Sigmoid colon (tissue), 7 donors: ENCODE measurements at regions of chr9 and their contacts with region 1.

Region 1: GRCh38 chr9:136790927-136791641 is at the start of gene TMEM141:
- DNase-seq: peak; percentile 100
- H3K4me3 ChIP-seq: peak within 1 kb of the TSS; percentile 43 to 76 (median 68)
- H3K27ac ChIP-seq: peak within 1 kb of the TSS; percentile 84 to 95 (median 90)
- H3K4me1 ChIP-seq: peaks cover 0 to 22% (median 20%) of the 10 kb centered on the region in 4 donors
- H3K27me3 ChIP-seq: peaks cover 0 to 5% (median 0%) of the 10 kb centered on the region in 3 donors
- CTCF ChIP-seq: no peak
- EP300 ChIP-seq: no peak
- POLR2A ChIP-seq: peak in 1 of 2 donors; percentile 84
- total RNA-seq, gene TMEM141: 37.5 to 84.7 (median 63.2) TPM

Region 2: GRCh38 chr9:136599811-136600660 is 191.0 kb before region 1 on chr9:
- intact Hi-C with region 1: no loop called
- DNase-seq: no peak
- H3K4me3 ChIP-seq: no peak overlapping the region
- H3K27ac ChIP-seq: no peak overlapping the region
- H3K4me1 ChIP-seq: peaks cover 0 to 27% (median 17%) of the 10 kb centered on the region in 4 donors
- H3K27me3 ChIP-seq: peaks cover 0 to 22% (median 0%) of the 10 kb centered on the region in 3 donors
- CTCF ChIP-seq: no peak
- EP300 ChIP-seq: no peak
- POLR2A ChIP-seq: no peak

Region 3: DNA sequence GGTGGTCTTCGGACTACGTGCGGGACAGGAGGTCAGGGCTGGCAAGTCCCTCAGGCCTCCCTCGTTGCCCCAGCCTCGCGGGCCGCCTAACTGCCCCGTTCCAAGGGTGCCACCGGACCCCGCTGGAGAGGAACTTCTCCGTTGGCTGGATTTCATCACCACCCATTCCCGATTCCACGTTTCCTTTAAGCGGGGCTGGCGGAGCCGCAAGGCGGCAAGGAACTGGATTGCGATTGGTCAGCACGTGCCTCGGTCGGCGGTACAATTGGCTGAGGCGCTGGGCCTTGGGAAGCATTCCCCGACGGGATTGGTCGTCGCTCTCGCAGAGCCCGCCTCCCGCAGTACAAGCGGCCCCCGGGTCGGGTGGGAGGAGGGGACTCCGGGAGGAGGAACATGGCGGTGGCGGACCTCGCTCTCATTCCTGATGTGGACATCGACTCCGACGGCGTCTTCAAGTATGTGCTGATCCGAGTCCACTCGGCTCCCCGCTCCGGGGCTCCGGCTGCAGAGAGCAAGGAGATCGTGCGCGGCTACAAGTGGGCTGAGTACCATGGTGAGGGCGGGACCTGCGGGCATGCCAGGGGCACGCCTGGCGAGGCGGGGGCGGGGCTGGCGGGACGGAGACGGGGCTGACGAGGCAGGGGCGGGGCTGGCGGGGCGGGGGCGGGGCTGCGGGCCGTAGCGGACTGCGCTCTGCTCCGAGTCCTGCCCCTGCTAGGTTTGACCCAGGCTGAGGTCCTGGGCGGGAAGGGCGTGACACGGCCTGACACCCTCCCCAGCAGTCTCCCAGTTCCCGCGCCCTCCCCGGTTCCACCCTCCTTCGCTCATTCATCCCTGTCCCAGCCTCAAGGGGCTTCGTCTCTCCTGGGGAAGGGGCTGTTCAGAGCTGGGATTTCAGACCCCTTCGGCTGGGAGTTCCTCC is 58.2 kb after region 1 on chr9 and contains the start of gene PHPT1:
- intact Hi-C with region 1: loop called (anchors 2 kb)
- DNase-seq: peak; percentile 100
- H3K4me3 ChIP-seq: peak within 1 kb of the TSS; percentile 68 to 82 (median 70)
- H3K27ac ChIP-seq: peak within 1 kb of the TSS; percentile 87 to 93 (median 90)
- H3K4me1 ChIP-seq: peaks cover 0 to 56% (median 51%) of the 10 kb centered on the region in 4 donors
- H3K27me3 ChIP-seq: peaks cover 24 to 40% (median 39%) of the 10 kb centered on the region in 3 donors
- CTCF ChIP-seq: no peak
- EP300 ChIP-seq: no peak
- POLR2A ChIP-seq: peak; percentile 58 to 90
- total RNA-seq, gene PHPT1: 39.0 to 73.1 (median 56.4) TPM

Region 4: GRCh38 chr9:136865735-136866103 is 74.6 kb after region 1 on chr9:
- intact Hi-C with region 1: loop called (anchors 5 kb)
- DNase-seq: peak; percentile 74
- H3K4me3 ChIP-seq: peak overlapping the region; percentile 93 to 100 (median 100)
- H3K27ac ChIP-seq: peak overlapping the region; percentile 90 to 97 (median 94)
- H3K4me1 ChIP-seq: peaks cover 0 to 29% (median 21%) of the 10 kb centered on the region in 4 donors
- H3K27me3 ChIP-seq: no peaks in the 10 kb centered on the region
- CTCF ChIP-seq: no peak
- EP300 ChIP-seq: no peak
- POLR2A ChIP-seq: no peak

Region 5: GRCh38 chr9:136885950-136886578 is 95.0 kb after region 1 on chr9 and contains the start of gene TRAF2:
- intact Hi-C with region 1: loop called (anchors 5 kb)
- DNase-seq: peak; percentile 99
- H3K4me3 ChIP-seq: peak within 1 kb of the TSS; percentile 70 to 99 (median 98)
- H3K27ac ChIP-seq: peak within 1 kb of the TSS; percentile 85 to 91 (median 88)
- H3K4me1 ChIP-seq: peaks cover 0 to 38% (median 32%) of the 10 kb centered on the region in 4 donors
- H3K27me3 ChIP-seq: no peaks in the 10 kb centered on the region
- CTCF ChIP-seq: no peak
- EP300 ChIP-seq: no peak
- POLR2A ChIP-seq: no peak
- total RNA-seq, gene TRAF2: 1.8 to 5.5 (median 3.9) TPM

Region 6: DNA sequence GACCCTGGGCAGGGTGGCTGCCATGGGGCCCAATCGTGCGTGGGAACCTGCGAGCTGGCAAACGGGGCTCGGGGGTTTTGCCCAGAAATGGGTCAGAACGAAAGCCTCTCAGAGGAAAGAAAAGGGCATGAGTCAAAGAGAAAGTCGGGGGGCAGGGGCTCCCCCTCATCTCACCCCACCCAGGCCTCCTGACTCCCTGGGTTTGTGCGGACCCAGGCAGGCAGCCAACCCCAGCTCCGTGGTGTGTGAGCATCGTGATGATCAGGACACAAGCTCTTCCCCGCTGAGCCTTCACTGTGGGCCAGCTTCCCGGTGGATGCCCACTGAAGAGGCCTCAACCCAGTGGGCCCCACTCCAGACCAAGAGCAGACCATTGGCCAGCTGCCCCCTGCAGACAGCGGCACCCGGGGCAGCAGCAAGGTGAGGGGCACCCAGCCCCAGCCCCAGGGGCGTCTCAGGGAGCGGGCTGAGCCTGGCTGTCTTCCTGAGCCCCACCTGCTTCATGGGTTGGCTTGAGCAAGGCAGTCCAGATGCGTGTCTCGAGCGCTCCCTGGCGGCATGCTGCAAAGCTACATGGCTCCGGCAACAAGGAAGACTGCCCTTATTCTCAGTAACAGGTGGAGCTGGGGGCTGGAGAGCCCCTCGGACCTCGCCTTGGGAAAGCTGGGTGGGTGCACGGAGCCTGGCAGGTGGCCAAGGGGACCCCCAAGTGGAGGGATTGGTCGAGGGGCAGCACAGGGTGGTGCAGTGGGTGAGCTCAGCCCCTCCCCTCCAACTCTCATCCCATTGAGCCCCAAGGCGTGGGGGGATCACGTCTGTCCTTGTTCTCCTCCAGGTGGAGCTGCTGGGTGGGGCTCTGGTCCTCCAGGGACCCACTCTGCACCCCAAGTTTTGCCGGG is 244.0 kb after region 1 on chr9:
- intact Hi-C with region 1: loop called (anchors 1 kb)
- DNase-seq: peak; percentile 89
- H3K4me3 ChIP-seq: no peak overlapping the region
- H3K27ac ChIP-seq: no peak overlapping the region
- H3K4me1 ChIP-seq: peaks cover 0 to 10% (median 9%) of the 10 kb centered on the region in 4 donors
- H3K27me3 ChIP-seq: peaks cover 0 to 9% (median 0%) of the 10 kb centered on the region in 3 donors
- CTCF ChIP-seq: peak; percentile 80 to 92 (median 86)
- EP300 ChIP-seq: no peak
- POLR2A ChIP-seq: no peak